ENCODE measurements at regions of chr2 and their contacts with region 1.

Region 1: DNA sequence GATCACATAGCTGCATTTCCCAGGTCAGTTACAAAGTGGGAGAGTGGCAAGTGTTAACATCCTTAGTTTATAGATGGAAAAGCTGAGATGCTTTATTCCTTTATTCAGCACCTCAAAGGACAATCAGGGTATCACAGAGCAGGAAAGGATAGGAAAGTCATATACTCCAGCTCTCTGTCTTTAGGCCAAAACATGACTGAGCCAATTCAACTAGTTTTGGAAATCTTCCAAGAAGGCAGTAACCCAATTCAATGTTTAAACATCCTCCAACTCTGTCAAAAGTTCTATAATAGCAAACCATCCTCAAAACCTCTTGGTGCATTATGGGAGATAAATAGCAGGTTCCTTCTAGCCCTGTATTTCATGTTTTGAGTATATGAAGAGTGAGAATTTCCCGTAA is 25.2 kb downstream of the CASP8 start:
- DNase-seq: no peak
- ATAC-seq: no peak
- H3K4me3 ChIP-seq: no peak overlapping the region
- H3K4me3 Mint-ChIP-seq: no peak overlapping the region
- H3K27ac ChIP-seq: no peak overlapping the region
- H3K27ac Mint-ChIP-seq: peak overlapping the region; percentile 64
- H3K4me1 ChIP-seq: no peaks in the 10 kb centered on the region
- H3K4me1 Mint-ChIP-seq: peaks cover 34% of the 10 kb centered on the region
- H3K27me3 ChIP-seq: peaks cover 0 to 3% of the 10 kb centered on the region in 2 experiments
- H3K27me3 Mint-ChIP-seq: no peaks in the 10 kb centered on the region
- CTCF ChIP-seq: no peak

Region 2: DNA sequence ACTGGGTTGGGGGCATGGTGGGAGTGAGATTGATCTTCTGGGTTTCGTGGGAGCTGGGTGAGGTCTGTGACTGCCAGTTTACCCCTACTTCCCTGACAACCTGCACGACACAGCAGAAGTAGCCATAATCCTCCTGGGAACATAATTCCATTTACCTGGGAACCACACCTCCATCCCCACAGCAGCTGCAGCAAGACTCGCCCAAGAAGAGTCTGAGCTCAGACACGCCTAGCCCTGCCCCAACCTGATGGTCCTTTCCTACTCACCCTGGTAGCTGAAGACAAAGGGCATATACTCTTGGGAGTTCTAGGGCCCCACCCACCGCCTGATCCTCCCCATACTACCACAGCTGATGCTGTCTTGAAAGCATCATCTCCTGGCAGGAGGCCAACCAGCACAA is 27.9 kb after region 1 on chr2:
- CTCF ChIA-PET with region 1: no interaction called
- POLR2A ChIA-PET with region 1: no interaction called
- intact Hi-C with region 1: no loop called
- DNase-seq: no peak
- ATAC-seq: no peak
- H3K4me3 ChIP-seq: no peak overlapping the region
- H3K4me3 Mint-ChIP-seq: no peak overlapping the region
- H3K27ac ChIP-seq: no peak overlapping the region
- H3K27ac Mint-ChIP-seq: no peak overlapping the region
- H3K4me1 ChIP-seq: no peaks in the 10 kb centered on the region
- H3K4me1 Mint-ChIP-seq: no peaks in the 10 kb centered on the region
- H3K27me3 ChIP-seq: no peaks in the 10 kb centered on the region
- H3K27me3 Mint-ChIP-seq: no peaks in the 10 kb centered on the region
- CTCF ChIP-seq: no peak

Region 3: GRCh38 chr2:201363857-201364560 is 78.5 kb after region 1 on chr2:
- CTCF ChIA-PET with region 1: interaction called, 4 read pairs
- POLR2A ChIA-PET with region 1: no interaction called
- intact Hi-C with region 1: loop called in 1 of 2 experiments (anchors 5 kb)
- DNase-seq: peak in 5 of 9 experiments; percentile 12 to 75 (median 60)
- ATAC-seq: peak; percentile 98
- H3K4me3 ChIP-seq: no peak overlapping the region
- H3K4me3 Mint-ChIP-seq: no peak overlapping the region
- H3K27ac ChIP-seq: no peak overlapping the region
- H3K27ac Mint-ChIP-seq: peak overlapping the region; percentile 37
- H3K4me1 ChIP-seq: peaks cover 31% of the 10 kb centered on the region
- H3K4me1 Mint-ChIP-seq: peaks cover 34% of the 10 kb centered on the region
- H3K27me3 ChIP-seq: no peaks in the 10 kb centered on the region
- H3K27me3 Mint-ChIP-seq: no peaks in the 10 kb centered on the region
- CTCF ChIP-seq: peak; percentile 87

Measured in CD8-positive, alpha-beta T cell (primary cell).